ENCODE measurements at regions of chr5 and their contacts with region 1.

Region 1: GRCh38 chr5:123527190-123527589 is 15.2 kb downstream of the CSNK1G3 start:
- DNase-seq: no peak
- ATAC-seq: no peak
- H3K4me3 Mint-ChIP-seq: no peak overlapping the region
- H3K27ac Mint-ChIP-seq: no peak overlapping the region
- H3K4me1 Mint-ChIP-seq: peaks cover 76% of the 10 kb centered on the region
- H3K27me3 Mint-ChIP-seq: no peaks in the 10 kb centered on the region
- CTCF ChIP-seq: no peak

Region 2: GRCh38 chr5:123538670-123539459 is 11.7 kb after region 1 on chr5:
- CTCF ChIA-PET with region 1: no interaction called
- POLR2A ChIA-PET with region 1: interaction called, 5 read pairs
- intact Hi-C with region 1: loop called (anchors 1 kb)
- DNase-seq: no peak
- ATAC-seq: peak; percentile 14
- H3K4me3 Mint-ChIP-seq: peak overlapping the region; percentile 5
- H3K27ac Mint-ChIP-seq: peak overlapping the region; percentile 54
- H3K4me1 Mint-ChIP-seq: peaks cover 73% of the 10 kb centered on the region
- H3K27me3 Mint-ChIP-seq: no peaks in the 10 kb centered on the region
- CTCF ChIP-seq: no peak